ENCODE measurements at regions of chr18 and their contacts with region 1.

Region 1: GRCh38 chr18:78984941-78985784 is 5.5 kb downstream of the SALL3 start:
- DNase-seq: peak; percentile 52
- ATAC-seq: peak; percentile 63
- H3K4me3 Mint-ChIP-seq: no peak overlapping the region
- H3K27ac Mint-ChIP-seq: no peak overlapping the region
- H3K4me1 Mint-ChIP-seq: peaks cover 5% of the 10 kb centered on the region
- H3K27me3 Mint-ChIP-seq: peaks cover 54% of the 10 kb centered on the region

Region 2: DNA sequence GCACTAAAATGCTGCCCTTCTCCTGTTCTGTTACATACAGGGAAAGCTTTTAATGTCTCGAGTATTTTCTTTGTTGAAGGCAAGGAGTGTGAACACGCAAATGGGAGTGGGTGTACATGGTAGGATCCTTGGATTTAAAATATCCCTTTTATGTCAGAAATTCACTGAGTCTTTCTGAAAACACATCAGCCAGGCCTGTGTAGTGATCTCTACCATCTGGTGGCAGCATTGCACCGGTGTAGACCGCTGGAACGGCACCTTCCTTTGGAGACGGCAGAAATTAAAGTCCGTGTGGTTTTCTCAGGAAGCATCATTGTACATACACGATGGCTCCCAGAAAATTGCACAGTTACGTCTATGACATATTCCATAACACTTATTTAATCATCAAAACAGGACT is 1219.7 kb before region 1 on chr18:
- CTCF ChIA-PET with region 1: no interaction called
- POLR2A ChIA-PET with region 1: no interaction called
- intact Hi-C with region 1: loop called in 1 of 2 experiments (anchors 10 kb)
- DNase-seq: peak; percentile 42
- ATAC-seq: no peak
- H3K4me3 Mint-ChIP-seq: no peak overlapping the region
- H3K27ac Mint-ChIP-seq: no peak overlapping the region
- H3K4me1 Mint-ChIP-seq: no peaks in the 10 kb centered on the region
- H3K27me3 Mint-ChIP-seq: peaks cover 17% of the 10 kb centered on the region

Region 3: DNA sequence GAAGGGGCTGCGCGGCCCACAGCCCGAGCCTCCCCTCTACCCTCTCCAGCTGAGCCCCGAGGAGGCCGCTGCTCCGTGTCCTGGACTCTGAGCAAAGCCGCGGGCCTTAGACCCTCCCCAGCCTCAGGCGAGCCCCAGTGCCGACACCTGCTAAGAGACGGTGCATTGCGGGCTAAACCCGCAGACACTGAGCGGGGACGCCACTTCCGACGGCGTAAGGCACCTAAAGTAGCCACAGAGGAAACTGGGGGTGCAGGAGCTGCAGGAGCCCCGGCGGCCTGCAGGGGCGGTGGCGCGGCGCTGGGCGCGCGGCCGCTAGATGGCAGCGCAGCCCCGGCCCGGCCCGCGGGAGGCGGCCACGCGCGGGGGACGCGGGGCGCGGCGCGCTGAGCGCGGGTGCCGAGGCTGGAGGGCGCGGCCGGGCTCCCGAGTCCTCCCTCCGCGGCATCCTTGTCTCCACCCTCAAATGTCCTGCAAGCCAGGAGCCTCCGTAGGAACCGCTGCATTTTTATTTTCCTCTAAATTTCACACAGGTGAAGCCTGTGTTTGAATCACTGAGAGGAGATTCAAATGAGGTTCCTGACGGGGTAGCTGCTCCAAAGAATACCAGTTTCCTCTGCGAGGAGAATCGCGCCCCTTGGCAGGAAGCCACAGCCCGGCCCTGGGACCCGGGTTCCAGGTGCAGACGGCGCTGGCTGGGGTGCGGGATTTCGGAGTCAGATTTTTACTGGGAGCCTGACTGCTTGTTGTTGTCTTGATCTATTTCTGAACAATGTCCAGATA is 1085.0 kb before region 1 on chr18:
- CTCF ChIA-PET with region 1: no interaction called
- POLR2A ChIA-PET with region 1: no interaction called
- intact Hi-C with region 1: loop called in 1 of 2 experiments (anchors 2 kb)
- DNase-seq: peak; percentile 76
- ATAC-seq: peak; percentile 98
- H3K4me3 Mint-ChIP-seq: peak overlapping the region; percentile 40
- H3K27ac Mint-ChIP-seq: no peak overlapping the region
- H3K4me1 Mint-ChIP-seq: peaks cover 4% of the 10 kb centered on the region
- H3K27me3 Mint-ChIP-seq: peaks cover 8% of the 10 kb centered on the region

Region 4: GRCh38 chr18:78659748-78660147 is 325.4 kb before region 1 on chr18:
- CTCF ChIA-PET with region 1: no interaction called
- POLR2A ChIA-PET with region 1: no interaction called
- intact Hi-C with region 1: loop called in 1 of 2 experiments (anchors 2 kb)
- DNase-seq: peak; percentile 51
- ATAC-seq: no peak
- H3K4me3 Mint-ChIP-seq: no peak overlapping the region
- H3K27ac Mint-ChIP-seq: no peak overlapping the region
- H3K4me1 Mint-ChIP-seq: no peaks in the 10 kb centered on the region
- H3K27me3 Mint-ChIP-seq: peaks cover 3% of the 10 kb centered on the region

Region 5: DNA sequence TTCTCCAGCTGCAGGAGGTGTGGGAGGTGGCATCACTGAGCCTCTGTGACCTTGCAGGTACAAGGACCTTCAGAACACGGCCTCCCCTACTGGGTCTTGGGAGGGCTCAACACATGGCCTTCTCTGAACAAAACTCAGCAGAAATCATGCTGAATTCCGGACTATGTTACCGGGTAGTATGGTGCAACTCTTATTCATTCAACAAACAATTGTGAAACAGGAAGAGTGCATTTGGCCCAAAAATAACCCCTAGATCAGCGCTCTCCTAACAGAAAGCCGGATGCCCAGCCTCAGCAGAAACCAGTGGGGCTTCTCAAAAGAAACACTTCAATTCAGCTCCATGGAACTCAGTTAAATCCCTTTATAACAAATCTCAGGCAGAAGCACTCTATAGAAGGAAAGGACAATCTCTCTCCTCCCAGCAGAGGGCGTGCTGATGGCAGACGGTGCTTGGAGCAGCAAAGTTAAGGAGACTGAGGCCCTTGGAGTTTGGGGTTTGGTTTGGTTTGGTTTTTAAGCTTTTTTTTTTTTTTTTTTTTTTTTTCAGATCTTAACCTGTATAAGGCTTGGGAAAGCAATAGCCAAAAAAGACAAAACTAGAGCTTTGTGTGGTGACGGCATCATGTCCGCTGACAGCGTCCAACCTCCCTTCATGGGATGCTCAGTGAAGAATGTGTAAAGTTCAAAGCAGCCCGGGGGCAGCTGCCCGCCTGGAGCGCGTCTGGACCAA is 109.7 kb before region 1 on chr18:
- CTCF ChIA-PET with region 1: interaction called, 8 read pairs
- POLR2A ChIA-PET with region 1: no interaction called
- intact Hi-C with region 1: loop called (anchors 1 to 5 kb)
- DNase-seq: peak; percentile 65
- ATAC-seq: peak; percentile 39
- H3K4me3 Mint-ChIP-seq: no peak overlapping the region
- H3K27ac Mint-ChIP-seq: no peak overlapping the region
- H3K4me1 Mint-ChIP-seq: no peaks in the 10 kb centered on the region
- H3K27me3 Mint-ChIP-seq: peaks cover 12% of the 10 kb centered on the region